ENCODE measurements at regions of chr1 and their contacts with region 1.

Region 1: DNA sequence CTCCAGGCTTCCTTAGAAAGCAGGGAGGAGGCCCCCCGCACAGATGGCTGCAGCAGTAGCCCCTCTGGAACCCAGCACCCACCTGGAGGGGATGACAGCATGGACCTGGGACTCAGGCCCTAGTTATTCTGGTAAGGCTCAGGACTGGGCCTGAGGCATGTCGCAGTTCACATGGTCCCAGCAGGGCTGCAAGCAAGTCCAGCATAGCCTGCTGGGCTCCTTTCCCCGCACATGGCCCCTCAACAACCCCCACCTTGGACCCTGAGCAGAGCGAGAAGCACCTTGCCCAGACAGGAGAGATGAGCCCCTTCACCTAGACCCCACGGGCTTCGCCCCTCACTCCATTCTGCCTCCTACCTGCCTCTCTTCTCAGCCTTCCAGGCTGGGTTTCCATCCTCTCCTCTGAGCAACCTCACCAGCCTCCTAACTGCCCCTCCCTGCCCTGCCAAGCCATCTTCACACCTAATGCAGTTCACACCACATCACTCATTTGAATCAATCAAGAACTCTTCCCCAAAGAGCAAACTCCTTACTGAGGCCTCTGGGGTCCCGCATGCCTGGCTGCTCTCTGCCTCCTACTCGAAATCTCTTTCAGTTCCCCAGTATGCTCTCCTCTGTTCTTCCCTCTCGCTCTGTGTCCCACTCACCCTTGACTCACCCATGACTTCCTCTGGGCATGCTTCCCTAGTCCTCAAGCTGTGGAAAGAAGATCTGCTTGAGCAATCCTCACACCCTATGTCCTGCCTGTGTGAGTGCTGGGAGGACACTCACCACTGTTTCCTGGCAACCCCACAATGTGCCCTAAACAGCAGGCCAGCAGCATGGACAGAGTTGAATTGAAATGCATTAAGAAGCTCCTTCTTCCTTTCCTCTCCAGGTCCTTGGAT is 9.4 kb upstream of the THEMIS2 start:
- DNase-seq: peak; percentile 82 to 86
- H3K4me3 ChIP-seq: no peak overlapping the region
- H3K27ac ChIP-seq: peak overlapping the region in 1 of 2 donors; percentile 37
- H3K4me1 ChIP-seq: peaks cover 0 to 3% (median 0%) of the 10 kb centered on the region in 4 donors
- H3K27me3 ChIP-seq: no peaks in the 10 kb centered on the region
- CTCF ChIP-seq: no peak

Region 2: GRCh38 chr1:27383039-27383605 is 479.8 kb before region 1 on chr1 and contains the start of gene CD164L2:
- intact Hi-C with region 1: no loop called
- DNase-seq: no peak
- H3K4me3 ChIP-seq: no peak within 1 kb of the TSS
- H3K27ac ChIP-seq: no peak within 1 kb of the TSS
- H3K4me1 ChIP-seq: peaks cover 0 to 29% (median 2%) of the 10 kb centered on the region in 4 donors
- H3K27me3 ChIP-seq: peaks cover 0 to 16% of the 10 kb centered on the region in 2 donors
- CTCF ChIP-seq: no peak

Region 3: GRCh38 chr1:27979151-27979858 is 116.4 kb after region 1 on chr1:
- intact Hi-C with region 1: loop called (anchors 5 kb)
- DNase-seq: no peak
- H3K4me3 ChIP-seq: no peak overlapping the region
- H3K27ac ChIP-seq: no peak overlapping the region
- H3K4me1 ChIP-seq: no peaks in the 10 kb centered on the region
- H3K27me3 ChIP-seq: no peaks in the 10 kb centered on the region
- CTCF ChIP-seq: peak; percentile 39 to 65